Left cardiac atrium (tissue), 4 donors: ENCODE measurements at regions of chr3 and their contacts with region 1.

Region 1: GRCh38 chr3:197501879-197502620 is 53.7 kb downstream of the BDH1 start:
- DNase-seq: no peak
- ATAC-seq: peak; percentile 61 to 70

Region 2: DNA sequence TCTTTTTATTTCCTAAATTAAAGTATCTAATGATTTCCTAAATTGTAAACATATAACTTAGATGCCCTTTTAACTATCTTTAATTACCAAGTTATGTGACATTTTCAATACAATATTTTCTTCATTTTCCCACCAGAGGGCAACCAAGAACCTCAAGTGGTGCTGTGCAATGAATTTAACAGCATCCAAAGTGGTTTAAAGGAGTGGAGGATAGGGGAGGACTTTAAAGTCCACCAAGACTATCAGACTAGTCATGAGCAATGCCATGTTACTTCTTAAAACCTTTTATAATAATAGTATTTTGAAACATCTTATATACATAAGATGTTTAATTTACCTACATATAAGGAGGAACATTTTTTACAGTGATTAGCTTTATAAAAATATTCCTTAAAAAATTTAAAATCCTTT is 278.0 kb before region 1 on chr3:
- intact Hi-C with region 1: loop called in 1 of 2 experiments (anchors 10 kb)
- DNase-seq: no peak
- ATAC-seq: peak; percentile 41 to 50

Region 3: GRCh38 chr3:197541756-197542539 is 39.9 kb after region 1 on chr3:
- intact Hi-C with region 1: no loop called
- DNase-seq: peak; percentile 77
- ATAC-seq: peak; percentile 82 to 91